Activated T-helper 1 cell treated with anti-CD3 and anti-CD28 coated beads, Interleukin-12 subunit alpha, Interleukin-12 subunit beta, Interleukin-2, Interleukin-4 antibody, amounts not matched to agents 30 ng/mL and 10 ng/mL and 1 ng/mL, durations not matched to agents 14 hours and 24 hours and 36 hours (primary cell): ENCODE measurements at regions of chrX and their contacts with region 1.

Region 1: DNA sequence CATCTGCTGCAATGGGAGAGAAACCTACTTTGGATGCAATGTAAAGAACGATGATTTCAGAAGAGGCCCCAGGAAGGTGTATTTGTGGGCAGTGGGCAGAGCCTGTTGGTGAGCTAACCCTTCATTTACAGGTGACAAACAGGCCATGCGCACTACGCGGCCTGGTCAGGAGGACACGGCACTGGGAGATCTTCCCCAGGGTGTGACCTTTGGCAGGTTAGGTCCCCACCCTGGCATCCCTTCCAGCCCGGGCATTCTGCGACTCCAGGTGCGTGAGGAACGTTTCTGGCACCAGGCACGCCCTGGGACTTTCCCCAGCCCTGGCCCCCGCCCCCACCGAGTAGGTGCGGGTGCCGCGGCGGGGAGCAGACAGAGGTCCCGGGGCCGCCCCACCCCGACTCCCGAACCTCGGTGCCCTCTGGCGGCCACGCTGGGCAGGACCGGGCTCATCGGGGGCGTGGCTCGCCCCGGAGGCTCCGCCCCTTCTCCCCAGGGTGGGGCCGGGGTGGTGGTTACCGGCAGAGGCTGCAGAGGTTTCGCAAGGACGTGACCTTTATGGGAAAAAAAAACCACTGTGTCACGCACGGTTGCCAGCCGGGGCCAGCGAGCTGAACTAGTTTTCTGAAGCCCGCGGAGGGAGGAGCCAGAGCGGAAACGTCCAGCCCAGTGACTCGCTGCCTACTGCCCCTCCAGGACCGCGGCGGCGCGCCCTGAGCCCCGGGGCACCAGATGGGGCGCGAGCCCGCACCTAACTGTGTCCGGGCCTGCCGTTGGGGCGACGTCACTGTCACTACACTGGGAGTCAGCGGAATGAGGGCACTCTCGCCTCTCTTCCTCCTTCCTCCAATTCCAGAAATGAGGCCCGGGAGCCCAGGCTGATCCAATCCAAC is 5.0 kb upstream of the NYX start:
- DNase-seq: peak; percentile 87
- H3K4me3 Mint-ChIP-seq: peak overlapping the region; percentile 73
- H3K27ac Mint-ChIP-seq: peak overlapping the region; percentile 85
- H3K4me1 Mint-ChIP-seq: peaks cover 18% of the 10 kb centered on the region
- H3K27me3 Mint-ChIP-seq: no peaks in the 10 kb centered on the region

Region 2: GRCh38 chrX:41275661-41276609 is 166.2 kb before region 1 on chrX:
- intact Hi-C with region 1: loop called (anchors 1 kb)
- DNase-seq: peak; percentile 16
- H3K4me3 Mint-ChIP-seq: peak overlapping the region; percentile 77
- H3K27ac Mint-ChIP-seq: peak overlapping the region; percentile 90
- H3K4me1 Mint-ChIP-seq: peaks cover 8% of the 10 kb centered on the region
- H3K27me3 Mint-ChIP-seq: no peaks in the 10 kb centered on the region

Region 3: GRCh38 chrX:41384041-41384705 is 58.0 kb before region 1 on chrX:
- intact Hi-C with region 1: loop called (anchors 2 kb)
- DNase-seq: peak; percentile 22
- H3K4me3 Mint-ChIP-seq: peak overlapping the region; percentile 47
- H3K27ac Mint-ChIP-seq: peak overlapping the region; percentile 97
- H3K4me1 Mint-ChIP-seq: peaks cover 16% of the 10 kb centered on the region
- H3K27me3 Mint-ChIP-seq: no peaks in the 10 kb centered on the region

Region 4: DNA sequence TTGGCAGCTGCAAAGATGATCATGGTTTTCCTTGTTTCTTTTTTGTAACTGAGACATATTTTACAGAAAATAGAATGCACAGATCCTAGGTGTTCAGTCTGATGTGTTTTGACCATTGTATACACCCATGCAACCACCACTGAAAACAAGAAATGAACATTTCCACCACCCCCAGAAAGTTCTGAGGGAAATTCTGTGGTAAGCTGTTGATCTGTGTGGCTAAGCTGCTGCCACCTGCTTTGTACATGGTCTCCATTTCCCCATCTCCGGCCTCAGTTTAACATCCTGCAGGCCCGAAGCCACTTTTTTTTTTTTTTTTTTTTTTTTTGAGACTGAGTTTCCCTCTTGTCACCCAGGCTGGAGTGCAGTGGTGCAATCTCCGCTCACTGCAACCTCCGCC is 70.2 kb after region 1 on chrX:
- intact Hi-C with region 1: loop called (anchors 1 kb)
- DNase-seq: peak; percentile 32
- H3K4me3 Mint-ChIP-seq: peak overlapping the region; percentile 16
- H3K27ac Mint-ChIP-seq: peak overlapping the region; percentile 88
- H3K4me1 Mint-ChIP-seq: peaks cover 40% of the 10 kb centered on the region
- H3K27me3 Mint-ChIP-seq: no peaks in the 10 kb centered on the region

Region 5: DNA sequence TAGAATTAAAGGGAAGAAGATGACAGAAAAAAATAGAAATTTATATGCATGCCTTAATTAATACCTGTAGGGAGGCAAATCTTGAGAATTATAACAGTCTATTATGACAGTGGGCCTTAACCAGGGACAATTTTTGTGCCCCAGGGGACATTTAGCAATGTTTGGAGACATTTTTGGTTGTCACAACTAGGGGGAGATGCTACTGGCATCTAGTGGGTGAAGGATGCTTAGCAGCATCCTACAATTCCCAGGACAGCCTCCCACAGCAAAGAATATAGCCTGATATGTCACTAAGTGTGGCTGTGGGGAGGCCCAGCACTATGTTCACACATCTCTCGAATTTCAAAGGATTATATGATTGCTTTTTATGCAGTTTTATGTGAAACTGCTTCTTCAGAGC is 292.4 kb after region 1 on chrX:
- intact Hi-C with region 1: loop called (anchors 10 kb)
- DNase-seq: no peak
- H3K4me3 Mint-ChIP-seq: peak overlapping the region; percentile 52
- H3K27ac Mint-ChIP-seq: peak overlapping the region; percentile 77
- H3K4me1 Mint-ChIP-seq: peaks cover 31% of the 10 kb centered on the region
- H3K27me3 Mint-ChIP-seq: no peaks in the 10 kb centered on the region